Colonic mucosa (tissue), 4 donors: ENCODE measurements at regions of chr3 and their contacts with region 1.

Region 1: GRCh38 chr3:3170998-3171397 is 8.5 kb downstream of the CRBN start:
- DNase-seq: no peak
- H3K4me3 ChIP-seq: no peak overlapping the region
- H3K27ac ChIP-seq: no peak overlapping the region
- H3K4me1 ChIP-seq: no peaks in the 10 kb centered on the region
- H3K27me3 ChIP-seq: no peaks in the 10 kb centered on the region
- CTCF ChIP-seq: peak; percentile 16

Region 2: DNA sequence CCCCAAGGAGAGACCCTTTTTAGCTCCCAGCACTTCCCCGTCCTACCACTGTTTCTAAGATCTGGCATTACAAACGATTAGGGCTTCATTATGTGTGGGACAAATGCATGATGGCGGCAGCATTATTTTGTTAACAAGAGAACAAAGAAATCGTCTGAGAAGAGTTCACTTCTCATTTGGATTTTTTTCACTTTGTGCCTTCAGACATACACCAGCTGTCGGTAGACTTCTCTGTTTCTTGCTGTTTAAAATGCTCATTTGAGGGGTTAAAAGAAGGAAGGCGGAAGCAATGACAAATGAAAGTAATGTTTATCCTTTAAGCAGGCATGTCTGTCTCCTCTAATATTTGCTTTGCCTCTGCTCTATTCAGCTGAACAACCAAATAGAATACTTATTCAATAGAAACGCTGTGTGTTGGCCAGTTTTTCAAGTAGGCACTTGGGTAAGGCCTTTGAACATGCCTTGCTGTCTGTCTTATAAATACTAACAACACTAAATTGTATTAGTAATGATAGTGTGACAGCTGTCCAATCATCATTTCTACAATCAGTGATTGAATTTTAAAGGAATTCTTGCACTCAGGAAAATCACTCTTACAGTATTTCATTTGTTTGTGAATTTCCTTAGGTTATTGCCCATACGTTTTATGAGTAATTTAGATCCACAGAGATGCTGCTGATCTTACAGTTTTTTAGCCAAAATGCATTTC is 443.2 kb before region 1 on chr3:
- intact Hi-C with region 1: no loop called
- DNase-seq: no peak
- H3K4me3 ChIP-seq: no peak overlapping the region
- H3K27ac ChIP-seq: no peak overlapping the region
- H3K4me1 ChIP-seq: no peaks in the 10 kb centered on the region
- H3K27me3 ChIP-seq: no peaks in the 10 kb centered on the region
- CTCF ChIP-seq: no peak

Region 3: DNA sequence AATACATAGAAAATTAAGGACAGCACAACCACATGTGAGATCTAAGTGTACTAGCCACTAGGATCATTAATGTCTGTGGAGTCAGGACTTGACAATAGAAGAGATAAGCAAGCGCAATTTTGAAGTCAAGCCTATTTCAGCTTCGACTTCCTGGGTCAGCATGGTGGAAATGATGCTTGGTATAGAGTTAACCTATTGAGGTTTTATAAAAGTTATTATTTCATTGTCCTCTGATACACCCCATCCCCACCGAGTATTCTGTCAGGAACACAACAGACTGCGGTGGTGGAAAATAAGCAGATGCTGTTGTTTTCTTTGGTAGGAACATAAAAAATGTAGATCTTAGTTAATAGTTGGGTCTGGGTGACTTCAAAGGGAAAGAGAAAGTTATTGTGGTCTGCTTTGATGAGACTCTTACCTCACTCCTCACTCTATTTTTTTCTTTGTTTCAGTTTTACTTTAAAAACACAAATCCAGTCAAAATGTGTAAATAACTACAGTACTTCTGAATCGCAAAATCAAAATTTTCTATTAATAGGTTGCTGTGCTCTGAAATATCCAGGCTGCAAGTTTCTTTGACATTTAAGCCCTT is 142.9 kb before region 1 on chr3:
- intact Hi-C with region 1: no loop called
- DNase-seq: no peak
- H3K4me3 ChIP-seq: no peak overlapping the region
- H3K27ac ChIP-seq: no peak overlapping the region
- H3K4me1 ChIP-seq: no peaks in the 10 kb centered on the region
- H3K27me3 ChIP-seq: no peaks in the 10 kb centered on the region
- CTCF ChIP-seq: no peak

Region 4: GRCh38 chr3:3134750-3135448 is 36.1 kb before region 1 on chr3:
- intact Hi-C with region 1: loop called (anchors 5 kb)
- DNase-seq: no peak
- H3K4me3 ChIP-seq: no peak overlapping the region
- H3K27ac ChIP-seq: no peak overlapping the region
- H3K4me1 ChIP-seq: peaks cover 8% of the 10 kb centered on the region
- H3K27me3 ChIP-seq: no peaks in the 10 kb centered on the region
- CTCF ChIP-seq: no peak

Region 5: GRCh38 chr3:3851621-3852323 is 680.8 kb after region 1 on chr3:
- intact Hi-C with region 1: no loop called
- DNase-seq: no peak
- H3K4me3 ChIP-seq: no peak overlapping the region
- H3K27ac ChIP-seq: no peak overlapping the region
- H3K4me1 ChIP-seq: no peaks in the 10 kb centered on the region
- H3K27me3 ChIP-seq: no peaks in the 10 kb centered on the region
- CTCF ChIP-seq: no peak